GM12878 (cell line): ENCODE measurements at regions of chr11 and their contacts with region 1.

Region 1: GRCh38 chr11:41431784-41432183 is 27.7 kb downstream of the LRRC4C start:
- DNase-seq: no peak
- ATAC-seq: 0 out of 3 replicates have a peak, but pooled peaks have one; percentile 27
- H3K4me3 ChIP-seq: no peak overlapping the region
- H3K27ac ChIP-seq: no peak overlapping the region
- H3K4me1 ChIP-seq: no peaks in the 10 kb centered on the region
- H3K27me3 ChIP-seq: no peaks in the 10 kb centered on the region
- CTCF ChIP-seq: peak; percentile 30 to 47 (median 44); a peak in 5 of 6 replicates
- EP300 ChIP-seq: no peak
- POLR2A ChIP-seq: no peak
- RAD21 ChIP-seq: peak; percentile 64

Region 2: DNA sequence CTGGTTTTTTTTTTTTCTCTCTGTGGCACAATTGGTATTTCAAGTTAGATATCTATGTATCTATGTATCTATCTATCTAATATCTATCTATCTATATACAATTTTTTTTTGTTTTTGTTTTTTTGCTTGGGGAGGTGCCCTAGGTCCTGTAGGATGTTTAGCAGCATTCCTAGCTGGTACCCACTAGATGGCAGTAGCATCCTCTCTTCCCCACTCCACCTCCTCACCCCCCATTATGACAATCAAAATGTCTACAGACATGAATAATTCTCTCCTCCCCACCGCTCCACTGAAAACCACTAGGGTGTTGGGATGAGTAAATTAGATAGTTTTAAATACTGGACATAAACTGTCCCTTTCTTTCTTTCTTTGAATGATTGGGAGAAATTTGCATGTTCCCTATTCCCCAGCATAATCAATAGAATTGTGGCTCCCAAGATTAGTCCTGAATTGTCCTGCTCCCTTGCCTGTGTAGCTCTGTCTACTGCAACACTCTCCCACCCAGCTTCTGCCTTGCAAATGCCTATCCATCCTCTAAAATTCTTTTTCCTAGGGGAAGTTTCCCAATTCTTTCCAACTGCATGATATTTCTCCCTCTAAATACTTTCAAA is 1124.7 kb before region 1 on chr11:
- CTCF ChIA-PET with region 1: interaction called, 4 read pairs
- POLR2A ChIA-PET with region 1: no interaction called
- RAD21 ChIA-PET with region 1: interaction called, 3 read pairs
- SMC1A ChIA-PET with region 1: no interaction called
- in situ Hi-C with region 1: loop called (anchors 25 kb)
- intact Hi-C with region 1: loop called (anchors 2 kb)
- DNase-seq: no peak
- ATAC-seq: peak; percentile 88
- H3K4me3 ChIP-seq: no peak overlapping the region
- H3K27ac ChIP-seq: no peak overlapping the region
- H3K4me1 ChIP-seq: no peaks in the 10 kb centered on the region
- H3K27me3 ChIP-seq: no peaks in the 10 kb centered on the region
- CTCF ChIP-seq: peak; percentile 45 to 65 (median 54)
- EP300 ChIP-seq: no peak
- POLR2A ChIP-seq: no peak
- RAD21 ChIP-seq: peak; percentile 57

Region 3: GRCh38 chr11:41245702-41246398 is 185.9 kb before region 1 on chr11:
- CTCF ChIA-PET with region 1: interaction called, 5 read pairs
- POLR2A ChIA-PET with region 1: no interaction called
- RAD21 ChIA-PET with region 1: interaction called, 12 read pairs
- SMC1A ChIA-PET with region 1: interaction called, 6 read pairs
- in situ Hi-C with region 1: no loop called
- intact Hi-C with region 1: loop called (anchors 2 kb)
- DNase-seq: no peak
- ATAC-seq: peak; percentile 73
- H3K4me3 ChIP-seq: no peak overlapping the region
- H3K27ac ChIP-seq: no peak overlapping the region
- H3K4me1 ChIP-seq: no peaks in the 10 kb centered on the region
- H3K27me3 ChIP-seq: no peaks in the 10 kb centered on the region
- CTCF ChIP-seq: peak in 2 of 3 experiments; percentile 16 to 35; a peak in 3 of 6 replicates
- EP300 ChIP-seq: no peak
- POLR2A ChIP-seq: no peak
- RAD21 ChIP-seq: peak; percentile 30; the same call in 1 of the 2 replicates

Region 4: DNA sequence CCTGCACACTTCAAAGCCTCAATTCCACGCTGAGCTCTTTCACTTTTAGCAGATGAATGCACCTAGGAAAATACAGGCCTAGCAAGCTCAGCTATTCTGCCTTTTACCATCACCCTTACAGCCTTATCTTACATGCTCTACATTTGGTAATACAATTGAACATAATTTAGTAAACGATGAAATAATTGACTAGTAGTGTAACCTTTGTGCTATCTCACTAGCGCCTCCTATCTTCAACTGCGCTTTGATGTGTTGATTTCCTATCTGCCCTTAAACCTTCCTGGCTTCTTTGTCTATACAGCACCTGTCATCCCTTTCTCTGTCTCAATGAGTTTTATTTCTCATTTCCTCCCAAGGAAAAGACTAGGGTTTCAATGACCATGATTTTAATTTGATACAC is 122.1 kb before region 1 on chr11:
- CTCF ChIA-PET with region 1: interaction called, 4 read pairs
- POLR2A ChIA-PET with region 1: no interaction called
- RAD21 ChIA-PET with region 1: interaction called, 17 read pairs
- SMC1A ChIA-PET with region 1: interaction called, 8 read pairs
- in situ Hi-C with region 1: no loop called
- intact Hi-C with region 1: no loop called
- DNase-seq: no peak
- ATAC-seq: peak; percentile 30
- H3K4me3 ChIP-seq: no peak overlapping the region
- H3K27ac ChIP-seq: no peak overlapping the region
- H3K4me1 ChIP-seq: peaks cover 8% of the 10 kb centered on the region
- H3K27me3 ChIP-seq: no peaks in the 10 kb centered on the region; a peak in 1 of 4 replicates
- CTCF ChIP-seq: peak in 2 of 3 experiments; percentile 17 to 20; a peak in 2 of 6 replicates
- EP300 ChIP-seq: no peak
- POLR2A ChIP-seq: no peak
- RAD21 ChIP-seq: no peak

Region 5: GRCh38 chr11:41413843-41414242 is 17.9 kb before region 1 on chr11:
- CTCF ChIA-PET with region 1: interaction called, 9 read pairs
- POLR2A ChIA-PET with region 1: no interaction called
- RAD21 ChIA-PET with region 1: interaction called, 18 read pairs
- SMC1A ChIA-PET with region 1: interaction called, 20 read pairs
- in situ Hi-C with region 1: no loop called
- intact Hi-C with region 1: no loop called
- DNase-seq: no peak
- ATAC-seq: peak; percentile 91
- H3K4me3 ChIP-seq: no peak overlapping the region
- H3K27ac ChIP-seq: no peak overlapping the region
- H3K4me1 ChIP-seq: no peaks in the 10 kb centered on the region
- H3K27me3 ChIP-seq: no peaks in the 10 kb centered on the region; a peak in 1 of 4 replicates
- CTCF ChIP-seq: no peak
- EP300 ChIP-seq: 0 out of 4 replicates have a peak, but pooled peaks of 1 of the 2 experiments have one; percentile 31
- POLR2A ChIP-seq: no peak
- RAD21 ChIP-seq: no peak

Region 6: GRCh38 chr11:41419901-41420300 is 11.9 kb before region 1 on chr11:
- CTCF ChIA-PET with region 1: interaction called, 9 read pairs
- POLR2A ChIA-PET with region 1: no interaction called
- RAD21 ChIA-PET with region 1: interaction called, 18 read pairs
- SMC1A ChIA-PET with region 1: interaction called, 20 read pairs
- in situ Hi-C with region 1: no loop called
- intact Hi-C with region 1: no loop called
- DNase-seq: no peak
- ATAC-seq: no peak
- H3K4me3 ChIP-seq: no peak overlapping the region
- H3K27ac ChIP-seq: no peak overlapping the region
- H3K4me1 ChIP-seq: no peaks in the 10 kb centered on the region
- H3K27me3 ChIP-seq: no peaks in the 10 kb centered on the region; a peak in 1 of 4 replicates
- CTCF ChIP-seq: no peak
- EP300 ChIP-seq: no peak
- POLR2A ChIP-seq: no peak
- RAD21 ChIP-seq: no peak

Region 7: DNA sequence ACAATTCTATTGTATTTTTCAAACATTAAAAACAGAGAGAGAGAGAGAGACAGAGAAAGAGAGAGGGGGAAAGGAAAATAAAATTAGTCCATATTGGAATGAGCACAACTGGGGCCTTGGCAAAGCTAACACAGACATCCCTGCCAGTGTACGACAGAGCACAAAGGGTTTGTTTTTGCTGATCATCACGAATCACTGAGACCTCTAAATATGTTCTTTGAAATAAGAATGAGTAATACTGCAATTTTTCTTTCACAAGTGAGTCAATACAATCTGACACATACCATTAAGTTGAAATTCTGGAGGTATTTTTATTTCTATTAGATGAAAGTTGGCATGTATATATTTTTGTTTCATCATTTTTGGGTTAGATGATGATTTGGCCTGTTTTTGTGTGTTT is 54.6 kb after region 1 on chr11:
- CTCF ChIA-PET with region 1: no interaction called
- POLR2A ChIA-PET with region 1: no interaction called
- RAD21 ChIA-PET with region 1: no interaction called
- SMC1A ChIA-PET with region 1: no interaction called
- in situ Hi-C with region 1: no loop called
- intact Hi-C with region 1: no loop called
- DNase-seq: no peak
- ATAC-seq: no peak
- H3K4me3 ChIP-seq: no peak overlapping the region
- H3K27ac ChIP-seq: no peak overlapping the region
- H3K4me1 ChIP-seq: no peaks in the 10 kb centered on the region
- H3K27me3 ChIP-seq: no peaks in the 10 kb centered on the region
- CTCF ChIP-seq: no peak
- EP300 ChIP-seq: no peak
- POLR2A ChIP-seq: no peak
- RAD21 ChIP-seq: no peak

Region 8: GRCh38 chr11:41784513-41785335 is 352.9 kb after region 1 on chr11:
- CTCF ChIA-PET with region 1: no interaction called
- POLR2A ChIA-PET with region 1: no interaction called
- RAD21 ChIA-PET with region 1: no interaction called
- SMC1A ChIA-PET with region 1: no interaction called
- in situ Hi-C with region 1: no loop called
- intact Hi-C with region 1: no loop called
- DNase-seq: no peak
- ATAC-seq: no peak
- H3K4me3 ChIP-seq: no peak overlapping the region
- H3K27ac ChIP-seq: no peak overlapping the region
- H3K4me1 ChIP-seq: no peaks in the 10 kb centered on the region
- H3K27me3 ChIP-seq: no peaks in the 10 kb centered on the region
- CTCF ChIP-seq: no peak
- EP300 ChIP-seq: no peak
- POLR2A ChIP-seq: no peak
- RAD21 ChIP-seq: no peak